ENCODE measurements at regions of chr2 and their contacts with region 1.

Region 1: GRCh38 chr2:40212804-40213470 is 239.0 kb downstream of the SLC8A1 start:
- DNase-seq: peak; percentile 26
- H3K4me3 Mint-ChIP-seq: no peak overlapping the region
- H3K27ac Mint-ChIP-seq: no peak overlapping the region
- H3K4me1 Mint-ChIP-seq: no peaks in the 10 kb centered on the region
- H3K27me3 Mint-ChIP-seq: no peaks in the 10 kb centered on the region
- CTCF ChIP-seq: peak; percentile 25

Region 2: GRCh38 chr2:40072442-40073232 is 140.3 kb before region 1 on chr2:
- CTCF ChIA-PET with region 1: no interaction called
- POLR2A ChIA-PET with region 1: no interaction called
- intact Hi-C with region 1: no loop called
- DNase-seq: no peak
- H3K4me3 Mint-ChIP-seq: no peak overlapping the region
- H3K27ac Mint-ChIP-seq: no peak overlapping the region
- H3K4me1 Mint-ChIP-seq: no peaks in the 10 kb centered on the region
- H3K27me3 Mint-ChIP-seq: no peaks in the 10 kb centered on the region
- CTCF ChIP-seq: no peak

Region 3: GRCh38 chr2:40202798-40203400 is 10.0 kb before region 1 on chr2:
- CTCF ChIA-PET with region 1: interaction called, 12 read pairs
- POLR2A ChIA-PET with region 1: no interaction called
- intact Hi-C with region 1: no loop called
- DNase-seq: no peak
- H3K4me3 Mint-ChIP-seq: no peak overlapping the region
- H3K27ac Mint-ChIP-seq: no peak overlapping the region
- H3K4me1 Mint-ChIP-seq: peaks cover 4% of the 10 kb centered on the region
- H3K27me3 Mint-ChIP-seq: no peaks in the 10 kb centered on the region
- CTCF ChIP-seq: no peak

Region 4: GRCh38 chr2:41026613-41027012 is 813.7 kb after region 1 on chr2:
- CTCF ChIA-PET with region 1: no interaction called
- POLR2A ChIA-PET with region 1: no interaction called
- intact Hi-C with region 1: no loop called
- DNase-seq: no peak
- H3K4me3 Mint-ChIP-seq: no peak overlapping the region
- H3K27ac Mint-ChIP-seq: no peak overlapping the region
- H3K4me1 Mint-ChIP-seq: no peaks in the 10 kb centered on the region
- H3K27me3 Mint-ChIP-seq: peaks cover 47% of the 10 kb centered on the region
- CTCF ChIP-seq: no peak